GM12878 (cell line): ENCODE measurements at regions of chr3 and their contacts with region 1.

Region 1: DNA sequence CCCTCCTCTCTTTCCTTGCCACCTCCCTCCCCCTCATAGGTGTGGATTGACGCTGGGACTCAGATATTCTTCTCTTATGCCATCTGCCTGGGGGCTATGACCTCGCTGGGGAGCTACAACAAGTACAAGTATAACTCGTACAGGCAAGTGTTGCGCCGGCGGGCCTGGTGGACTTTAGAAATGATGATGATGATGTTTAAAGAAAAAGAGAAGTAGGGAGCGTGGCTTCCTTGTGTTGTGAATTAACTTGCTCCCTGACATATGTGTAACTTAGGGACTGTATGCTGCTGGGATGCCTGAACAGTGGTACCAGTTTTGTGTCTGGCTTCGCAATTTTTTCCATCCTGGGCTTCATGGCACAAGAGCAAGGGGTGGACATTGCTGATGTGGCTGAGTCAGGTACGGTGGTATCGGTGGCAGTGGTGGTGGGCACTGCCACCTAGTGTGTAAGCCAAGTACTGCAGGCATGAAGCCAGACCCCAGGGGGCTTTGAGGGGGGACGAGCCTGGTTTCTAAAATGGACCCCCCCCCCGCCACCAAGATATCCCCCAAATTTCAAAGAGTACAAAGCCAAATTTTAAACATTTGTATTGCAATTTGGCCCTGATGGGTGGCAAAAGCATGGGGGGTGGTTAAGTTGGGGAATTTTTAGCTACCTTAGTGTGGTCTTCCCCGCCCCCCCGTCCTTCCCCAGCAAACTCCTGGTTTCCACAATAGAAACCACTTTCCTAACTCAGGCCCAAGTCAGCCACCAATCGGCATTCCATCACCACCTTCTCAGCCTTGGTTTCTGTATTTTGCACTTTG is 65.6 kb downstream of the SLC6A6 start:
- DNase-seq: no peak
- ATAC-seq: peak; percentile 89
- H3K4me3 ChIP-seq: no peak overlapping the region
- H3K27ac ChIP-seq: no peak overlapping the region
- H3K4me1 ChIP-seq: no peaks in the 10 kb centered on the region
- H3K27me3 ChIP-seq: no peaks in the 10 kb centered on the region
- CTCF ChIP-seq: peak; percentile 67 to 85 (median 84)
- EP300 ChIP-seq: no peak
- POLR2A ChIP-seq: no peak
- RAD21 ChIP-seq: peak; percentile 79

Region 2: DNA sequence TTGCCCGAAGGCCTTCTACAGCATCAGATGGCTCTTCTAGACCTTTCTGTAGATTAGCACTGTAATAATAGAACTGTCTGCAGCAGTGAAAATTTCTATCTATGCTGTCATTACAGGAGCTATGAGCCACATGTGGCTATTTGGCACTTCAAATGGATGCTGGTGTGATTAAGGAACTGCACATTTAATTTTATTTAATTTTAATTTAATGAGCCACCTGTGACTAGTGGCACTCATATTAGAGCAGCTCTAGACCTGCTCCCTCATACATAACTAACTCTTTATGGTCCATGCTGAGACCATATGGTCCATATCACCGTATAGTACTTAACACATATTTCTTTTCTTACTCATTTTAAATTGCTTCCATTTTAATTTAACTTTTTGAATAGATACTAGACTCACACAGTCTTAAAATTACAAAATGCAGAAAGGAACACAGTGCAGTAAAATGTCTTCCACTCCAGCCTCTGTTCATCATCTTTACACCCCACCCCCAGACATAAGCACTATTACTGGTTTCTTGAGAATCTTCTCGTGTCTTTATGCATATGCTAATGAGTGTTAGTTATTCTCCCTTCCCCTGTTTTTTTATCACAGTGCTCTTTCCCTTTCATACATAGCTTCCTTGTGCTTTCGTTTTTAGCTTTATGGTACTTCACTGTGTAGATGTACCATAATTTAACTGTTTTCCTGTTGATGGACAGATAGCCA is 279.8 kb before region 1 on chr3:
- CTCF ChIA-PET with region 1: no interaction called
- POLR2A ChIA-PET with region 1: interaction called, 11 read pairs
- RAD21 ChIA-PET with region 1: no interaction called
- SMC1A ChIA-PET with region 1: no interaction called
- in situ Hi-C with region 1: no loop called
- intact Hi-C with region 1: no loop called
- DNase-seq: no peak
- ATAC-seq: no peak
- H3K4me3 ChIP-seq: no peak overlapping the region
- H3K27ac ChIP-seq: no peak overlapping the region
- H3K4me1 ChIP-seq: no peaks in the 10 kb centered on the region; the same call in 1 of the 2 replicates
- H3K27me3 ChIP-seq: no peaks in the 10 kb centered on the region
- CTCF ChIP-seq: no peak
- EP300 ChIP-seq: no peak
- POLR2A ChIP-seq: no peak
- RAD21 ChIP-seq: no peak

Region 3: GRCh38 chr3:14261229-14261628 is 206.8 kb before region 1 on chr3:
- CTCF ChIA-PET with region 1: interaction called, 25 read pairs
- POLR2A ChIA-PET with region 1: no interaction called
- RAD21 ChIA-PET with region 1: interaction called, 15 read pairs
- SMC1A ChIA-PET with region 1: interaction called, 24 read pairs
- in situ Hi-C with region 1: loop called (anchors 5 kb)
- intact Hi-C with region 1: loop called (anchors 1 kb)
- DNase-seq: peak; percentile 16
- ATAC-seq: peak; percentile 94
- H3K4me3 ChIP-seq: no peak overlapping the region
- H3K27ac ChIP-seq: no peak overlapping the region
- H3K4me1 ChIP-seq: no peaks in the 10 kb centered on the region
- H3K27me3 ChIP-seq: peaks cover 0 to 4% of the 10 kb centered on the region in 2 experiments; a peak in 2 of 4 replicates
- CTCF ChIP-seq: peak; percentile 89 to 95 (median 94); a peak in 5 of 6 replicates
- EP300 ChIP-seq: no peak
- POLR2A ChIP-seq: no peak
- RAD21 ChIP-seq: peak; percentile 98

Region 4: DNA sequence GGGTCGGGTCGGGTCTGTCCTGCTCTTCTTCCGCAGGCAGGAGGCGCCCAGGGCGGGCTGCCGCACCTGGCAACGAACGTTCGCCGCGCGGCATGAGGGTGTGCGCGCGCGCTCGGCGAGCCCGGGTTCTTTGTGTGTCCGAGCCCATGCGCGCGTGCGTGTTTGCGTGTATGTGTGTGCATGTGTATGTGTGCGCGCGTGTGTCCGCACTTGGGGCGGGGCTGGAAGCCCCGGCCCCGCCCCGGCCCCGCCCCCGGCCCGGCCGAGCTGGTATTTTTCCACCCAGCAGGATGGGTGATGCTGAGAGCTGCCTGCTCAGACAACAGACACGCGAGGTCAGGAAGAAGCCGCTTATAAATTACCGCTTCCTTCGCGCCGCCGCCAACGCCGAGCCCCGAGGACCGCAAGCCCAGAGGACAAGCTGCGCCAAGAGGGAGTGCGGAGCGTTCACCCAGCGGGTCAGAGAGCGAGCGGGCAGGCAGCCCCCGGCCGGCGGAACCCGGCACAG is 65.7 kb before region 1 on chr3 and contains the start of gene SLC6A6:
- CTCF ChIA-PET with region 1: interaction called, 15 read pairs
- POLR2A ChIA-PET with region 1: no interaction called
- RAD21 ChIA-PET with region 1: interaction called, 4 read pairs
- SMC1A ChIA-PET with region 1: interaction called, 4 read pairs
- in situ Hi-C with region 1: no loop called
- intact Hi-C with region 1: loop called (anchors 1 kb)
- DNase-seq: peak; percentile 79
- ATAC-seq: peak; percentile 82
- H3K4me3 ChIP-seq: peak within 1 kb of the TSS; percentile 89
- H3K27ac ChIP-seq: peak within 1 kb of the TSS; percentile 82
- H3K4me1 ChIP-seq: peaks cover 29% of the 10 kb centered on the region
- H3K27me3 ChIP-seq: no peaks in the 10 kb centered on the region; a peak in 1 of 4 replicates
- CTCF ChIP-seq: peak; percentile 38 to 54 (median 41); a peak in 5 of 6 replicates
- EP300 ChIP-seq: 0 out of 4 replicates have a peak, but pooled peaks of 1 of the 2 experiments have one; percentile 24
- POLR2A ChIP-seq: peak; percentile 78
- RAD21 ChIP-seq: peak; percentile 46; the same call in 1 of the 2 replicates
- polyA plus RNA-seq, gene SLC6A6: 5.6 to 6.2 TPM

Region 5: GRCh38 chr3:14431892-14432834 is 35.9 kb before region 1 on chr3:
- CTCF ChIA-PET with region 1: interaction called, 17 read pairs
- POLR2A ChIA-PET with region 1: no interaction called
- RAD21 ChIA-PET with region 1: interaction called, 11 read pairs
- SMC1A ChIA-PET with region 1: interaction called, 18 read pairs
- in situ Hi-C with region 1: no loop called
- intact Hi-C with region 1: no loop called
- DNase-seq: peak; percentile 90
- ATAC-seq: peak; percentile 87
- H3K4me3 ChIP-seq: peak overlapping the region; percentile 60
- H3K27ac ChIP-seq: peak overlapping the region; percentile 99
- H3K4me1 ChIP-seq: peaks cover 66% of the 10 kb centered on the region
- H3K27me3 ChIP-seq: no peaks in the 10 kb centered on the region
- CTCF ChIP-seq: no peak
- EP300 ChIP-seq: peak; percentile 51 to 71; a peak in 2 of 4 replicates
- POLR2A ChIP-seq: peak; percentile 87
- RAD21 ChIP-seq: no peak

Region 6: GRCh38 chr3:14439579-14440518 is 28.2 kb before region 1 on chr3:
- CTCF ChIA-PET with region 1: interaction called, 12 read pairs
- POLR2A ChIA-PET with region 1: interaction called, 5 read pairs
- RAD21 ChIA-PET with region 1: no interaction called
- SMC1A ChIA-PET with region 1: interaction called, 4 read pairs
- in situ Hi-C with region 1: no loop called
- intact Hi-C with region 1: no loop called
- DNase-seq: no peak
- ATAC-seq: peak; percentile 73
- H3K4me3 ChIP-seq: no peak overlapping the region
- H3K27ac ChIP-seq: no peak overlapping the region
- H3K4me1 ChIP-seq: peaks cover 13% of the 10 kb centered on the region
- H3K27me3 ChIP-seq: no peaks in the 10 kb centered on the region
- CTCF ChIP-seq: no peak
- EP300 ChIP-seq: no peak
- POLR2A ChIP-seq: no peak
- RAD21 ChIP-seq: no peak